Activated CD4-positive, alpha-beta T cell treated with anti-CD3 and anti-CD28 coated beads, Interleukin-2, amount 10 ng/mL, durations not matched to agents 24 days and 14 days (primary cell): ENCODE measurements at regions of chr14 and their contacts with region 1.

Region 1: GRCh38 chr14:70907176-70907995 is at the start of gene PCNX1:
- DNase-seq: peak; percentile 97
- H3K4me3 Mint-ChIP-seq: peak within 1 kb of the TSS; percentile 94
- H3K27ac Mint-ChIP-seq: peak within 1 kb of the TSS; percentile 95
- H3K4me1 Mint-ChIP-seq: peaks cover 54% of the 10 kb centered on the region
- H3K27me3 Mint-ChIP-seq: no peaks in the 10 kb centered on the region
- total RNA-seq, gene PCNX1: 45.5 and 56.0 TPM in 2 replicates

Region 2: DNA sequence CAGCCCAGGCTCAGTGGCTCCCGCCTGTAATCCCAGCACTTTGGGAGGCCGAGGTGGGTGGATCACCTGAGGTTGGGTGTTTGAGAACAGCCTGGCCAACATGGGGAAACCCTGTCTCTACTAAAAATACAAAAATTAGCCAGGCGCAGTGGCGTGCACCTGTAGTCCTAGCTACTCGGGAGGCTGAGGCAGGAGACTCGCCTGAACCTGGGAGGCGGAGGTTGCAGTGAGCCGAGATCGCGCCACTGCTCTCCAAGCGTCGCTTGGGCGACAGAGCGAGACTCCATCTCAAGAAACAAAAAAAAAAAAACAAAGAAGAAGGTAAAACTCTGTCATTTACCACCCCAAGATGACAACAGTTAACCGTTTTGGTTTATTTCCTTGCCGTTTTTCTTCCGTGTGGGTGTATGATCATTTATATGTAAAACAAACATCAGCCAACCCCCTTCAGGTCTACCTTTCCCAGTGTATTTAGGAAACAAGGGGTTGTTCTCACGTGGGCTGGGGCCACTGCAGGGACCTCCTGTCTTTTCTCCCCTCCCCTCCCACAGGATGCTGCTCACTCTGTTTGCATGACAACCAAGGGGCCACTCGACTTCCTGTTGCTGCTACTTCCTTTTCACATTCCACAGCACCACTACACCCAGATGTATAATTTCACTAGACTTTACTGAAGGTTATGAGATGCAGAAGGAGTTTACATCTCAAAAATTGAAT is 252.1 kb before region 1 on chr14:
- intact Hi-C with region 1: loop called (anchors 5 kb)
- DNase-seq: peak; percentile 94
- H3K4me3 Mint-ChIP-seq: peak overlapping the region; percentile 85
- H3K27ac Mint-ChIP-seq: peak overlapping the region; percentile 98
- H3K4me1 Mint-ChIP-seq: peaks cover 73% of the 10 kb centered on the region
- H3K27me3 Mint-ChIP-seq: no peaks in the 10 kb centered on the region

Region 3: DNA sequence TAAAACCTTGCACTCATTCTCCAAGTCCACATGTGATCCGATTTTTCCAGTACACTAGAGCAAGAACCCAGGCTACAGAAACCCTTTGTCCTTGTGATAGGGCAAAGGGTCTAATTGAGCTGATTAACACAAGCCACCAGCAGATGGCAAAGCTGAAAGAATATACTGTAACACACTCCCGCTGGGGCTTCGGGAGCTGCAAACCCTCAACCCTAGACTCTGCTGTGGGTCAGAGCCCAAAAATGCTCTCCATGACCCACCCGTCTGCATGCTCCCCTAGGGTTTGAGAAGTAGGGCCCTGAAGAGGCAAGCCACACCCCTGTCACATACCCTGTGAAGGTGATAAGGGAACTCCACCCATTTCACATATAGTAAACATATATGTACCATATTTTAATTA is 33.8 kb before region 1 on chr14:
- intact Hi-C with region 1: loop called (anchors 5 kb)
- DNase-seq: peak; percentile 70
- H3K4me3 Mint-ChIP-seq: no peak overlapping the region
- H3K27ac Mint-ChIP-seq: no peak overlapping the region
- H3K4me1 Mint-ChIP-seq: peaks cover 15% of the 10 kb centered on the region
- H3K27me3 Mint-ChIP-seq: no peaks in the 10 kb centered on the region

Region 4: GRCh38 chr14:70894868-70895267 is 12.5 kb before region 1 on chr14:
- intact Hi-C with region 1: loop called (anchors 1 kb)
- DNase-seq: peak; percentile 72
- H3K4me3 Mint-ChIP-seq: peak overlapping the region; percentile 44
- H3K27ac Mint-ChIP-seq: peak overlapping the region; percentile 87
- H3K4me1 Mint-ChIP-seq: peaks cover 66% of the 10 kb centered on the region
- H3K27me3 Mint-ChIP-seq: no peaks in the 10 kb centered on the region

Region 5: GRCh38 chr14:70934502-70935134 is 27.2 kb after region 1 on chr14:
- intact Hi-C with region 1: loop called (anchors 2 kb)
- DNase-seq: no peak
- H3K4me3 Mint-ChIP-seq: peak overlapping the region; percentile 61
- H3K27ac Mint-ChIP-seq: peak overlapping the region; percentile 73
- H3K4me1 Mint-ChIP-seq: peaks cover 50% of the 10 kb centered on the region
- H3K27me3 Mint-ChIP-seq: no peaks in the 10 kb centered on the region

Region 6: DNA sequence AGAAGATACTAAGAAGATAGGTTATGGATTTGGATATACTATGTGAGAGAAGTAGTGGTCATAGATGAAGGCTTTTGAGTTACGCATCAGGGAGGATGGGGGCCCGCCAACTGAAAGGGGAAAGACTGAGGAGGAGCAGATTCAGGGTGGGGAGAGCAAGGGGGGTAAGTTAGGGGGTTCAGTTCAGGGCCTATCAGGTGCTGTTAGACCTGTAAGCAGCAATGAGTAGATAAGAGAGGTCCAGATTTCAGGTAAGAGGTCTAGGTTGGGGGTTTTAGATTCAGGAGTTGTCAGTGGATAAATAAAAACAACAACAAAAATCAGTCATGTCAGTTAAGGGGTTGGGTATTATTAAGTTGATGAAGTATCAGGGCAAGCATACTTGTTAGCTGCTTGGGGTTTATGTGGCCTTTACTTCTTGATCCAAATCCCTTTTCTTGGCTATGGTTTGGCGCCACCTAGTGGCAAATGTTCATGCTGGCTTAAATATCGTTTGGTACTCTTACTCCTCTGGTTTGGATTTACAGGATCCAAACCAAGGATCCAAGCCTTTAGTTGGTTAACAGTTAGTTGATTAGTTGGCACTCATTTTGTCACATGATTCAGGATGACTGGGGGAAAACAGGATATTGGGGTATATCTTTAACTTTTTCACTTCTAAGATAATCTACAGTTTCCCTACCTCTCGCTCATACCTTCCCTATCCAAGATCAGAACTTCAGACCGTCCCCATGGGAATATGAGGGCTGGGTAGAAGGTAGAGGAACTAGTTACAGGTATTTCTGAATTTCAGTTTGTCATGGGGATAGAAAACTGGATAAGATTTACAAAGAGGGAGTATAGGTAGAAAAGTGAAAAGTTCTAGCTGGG is 65.0 kb after region 1 on chr14:
- intact Hi-C with region 1: loop called (anchors 1 kb)
- DNase-seq: peak; percentile 94
- H3K4me3 Mint-ChIP-seq: no peak overlapping the region
- H3K27ac Mint-ChIP-seq: peak overlapping the region; percentile 17
- H3K4me1 Mint-ChIP-seq: peaks cover 18% of the 10 kb centered on the region
- H3K27me3 Mint-ChIP-seq: no peaks in the 10 kb centered on the region

Region 7: DNA sequence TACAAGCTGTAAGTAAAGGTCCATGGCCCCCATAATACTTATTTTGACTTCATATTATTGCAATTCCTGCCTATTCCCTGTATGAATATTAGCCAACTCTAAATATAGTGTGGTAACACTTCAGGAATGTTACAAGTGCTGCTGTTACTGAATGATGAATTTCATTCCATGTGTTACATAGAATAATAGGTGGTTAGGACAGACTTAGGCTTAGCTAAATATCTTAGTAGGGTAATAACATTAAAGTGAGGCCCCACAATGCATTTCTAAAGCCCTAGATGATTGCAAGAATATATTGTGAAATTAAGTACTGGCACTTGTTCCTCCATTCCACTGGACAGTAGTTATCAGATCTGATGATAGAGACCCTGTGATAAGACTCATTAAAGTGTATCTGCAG is 182.6 kb after region 1 on chr14:
- intact Hi-C with region 1: no loop called
- DNase-seq: no peak
- H3K4me3 Mint-ChIP-seq: no peak overlapping the region
- H3K27ac Mint-ChIP-seq: no peak overlapping the region
- H3K4me1 Mint-ChIP-seq: no peaks in the 10 kb centered on the region
- H3K27me3 Mint-ChIP-seq: no peaks in the 10 kb centered on the region